ENCODE measurements at regions of chr21 and their contacts with region 1.

Region 1: GRCh38 chr21:28342212-28342810 is 650.4 kb downstream of the LTN1 start:
- DNase-seq: no peak
- ATAC-seq: no peak

Region 2: GRCh38 chr21:28380241-28380640 is 37.9 kb after region 1 on chr21:
- intact Hi-C with region 1: no loop called
- DNase-seq: no peak
- ATAC-seq: no peak

Region 3: GRCh38 chr21:28516991-28517592 is 174.8 kb after region 1 on chr21:
- intact Hi-C with region 1: loop called (anchors 10 kb)
- DNase-seq: peak; percentile 79
- ATAC-seq: peak; percentile 97